Cardiac septum (tissue), 1 donor: ENCODE measurements at regions of chr3 and their contacts with region 1.

Region 1: GRCh38 chr3:169041677-169042171 is 621.8 kb downstream of the MECOM start:
- DNase-seq: no peak

Region 2: GRCh38 chr3:168534761-168535160 is 507.0 kb before region 1 on chr3:
- intact Hi-C with region 1: no loop called
- DNase-seq: no peak

Region 3: DNA sequence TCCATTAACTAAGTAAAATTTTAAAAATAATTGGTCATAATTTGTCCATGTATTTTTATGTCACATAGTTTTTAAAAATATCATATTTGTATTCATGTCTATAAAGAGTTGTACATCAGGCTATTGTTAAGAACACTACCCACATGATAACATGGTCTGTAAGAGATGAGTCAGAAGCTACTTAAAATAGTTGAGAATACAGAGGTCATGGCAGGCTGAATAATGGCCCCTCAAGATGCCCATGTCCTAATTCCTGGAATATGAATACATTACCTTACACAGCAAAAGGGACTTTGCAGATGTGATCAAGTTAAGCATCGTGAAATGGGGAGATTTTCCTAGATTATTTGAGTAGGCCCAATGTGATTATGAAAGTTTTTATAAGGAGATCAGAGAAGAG is 163.1 kb before region 1 on chr3:
- intact Hi-C with region 1: loop called (anchors 10 kb)
- DNase-seq: no peak

Region 4: DNA sequence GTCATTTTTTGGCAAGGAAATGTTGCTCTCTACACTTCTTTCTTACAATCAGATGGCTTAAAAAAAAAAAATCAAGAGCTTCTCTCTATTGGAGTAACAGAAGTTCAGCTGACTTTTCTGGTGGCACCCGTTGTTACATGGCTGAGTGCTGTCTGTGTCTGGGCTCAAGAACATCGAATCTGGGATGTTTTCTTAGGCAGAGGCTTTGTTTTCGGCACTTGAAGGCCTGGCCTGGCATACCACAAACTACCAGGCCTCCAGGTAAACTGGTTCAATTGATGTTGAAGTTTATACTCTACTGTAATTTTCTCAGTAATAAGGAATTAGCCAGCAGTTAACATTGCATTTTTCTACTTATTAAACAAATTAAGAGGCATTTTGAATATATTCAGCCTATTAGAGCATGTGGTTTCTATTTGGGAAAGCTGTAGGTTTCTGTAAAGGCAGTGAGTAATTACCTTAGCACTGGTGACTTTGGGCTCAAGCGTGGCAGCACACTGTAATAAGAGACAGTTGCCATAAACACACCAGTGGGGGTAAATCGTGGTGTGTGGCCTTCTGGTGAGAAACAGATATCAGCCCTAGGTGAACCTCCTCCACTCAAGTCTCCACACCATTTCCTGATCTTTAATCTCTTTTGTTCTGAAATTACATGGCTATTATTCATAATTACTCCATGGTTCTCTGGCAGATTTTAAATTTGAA is 77.1 kb after region 1 on chr3:
- intact Hi-C with region 1: loop called (anchors 5 kb)
- DNase-seq: no peak

Region 5: DNA sequence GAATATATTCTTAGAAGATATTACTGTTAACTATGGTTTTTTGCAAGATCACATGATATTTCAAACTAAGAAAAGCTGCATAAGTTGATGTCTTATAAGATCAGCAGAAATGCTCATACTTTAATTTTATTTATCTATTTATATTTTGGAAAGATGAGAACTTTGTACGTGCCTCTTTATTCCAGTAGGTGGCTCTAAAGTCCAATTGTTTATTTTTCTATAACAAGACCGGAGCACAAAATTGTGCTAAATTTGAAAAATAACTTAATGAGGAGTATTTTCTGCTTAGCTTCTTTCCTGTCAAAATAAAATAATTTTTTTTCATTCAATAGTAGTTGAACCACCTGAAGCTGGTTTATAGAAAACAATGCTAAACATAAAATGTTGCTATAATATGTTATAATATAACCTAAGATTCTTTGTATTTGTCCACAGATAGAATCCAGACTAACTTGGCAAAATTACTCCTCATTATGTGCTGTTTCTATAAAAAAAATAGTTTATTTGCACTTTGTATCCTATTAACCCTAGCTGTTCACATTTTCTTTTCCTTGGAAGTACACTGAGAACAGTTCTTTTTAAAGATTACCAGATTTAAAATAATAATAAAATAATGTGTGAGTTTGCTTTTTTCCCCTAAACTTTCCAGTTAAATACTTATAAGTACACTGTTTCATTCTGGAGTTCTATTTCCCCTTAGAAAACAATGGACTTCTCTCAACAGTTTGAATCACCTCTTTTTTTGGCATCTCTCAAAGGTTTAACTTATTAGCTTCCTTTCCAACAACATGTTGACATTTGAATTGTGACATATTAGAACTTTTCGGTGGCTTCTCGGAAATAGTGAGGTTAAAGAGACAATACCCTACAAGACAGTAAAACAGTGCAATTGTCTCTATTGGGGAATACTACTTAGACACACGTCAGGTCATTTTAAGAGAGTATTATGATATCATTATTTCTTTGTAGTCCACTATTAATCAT is 91.7 kb after region 1 on chr3:
- intact Hi-C with region 1: loop called (anchors 5 kb)
- DNase-seq: no peak

Region 6: GRCh38 chr3:169668957-169669681 is 627.4 kb after region 1 on chr3:
- intact Hi-C with region 1: loop called (anchors 2 kb)
- DNase-seq: peak; percentile 85